ENCODE measurements at regions of chr17 and their contacts with region 1.

Region 1: GRCh38 chr17:27245230-27245696 is 48.7 kb upstream of the WSB1 start:
- DNase-seq: peak; percentile 5 to 69 (median 30)
- ATAC-seq: peak; percentile 77
- H3K4me3 ChIP-seq: no peak overlapping the region
- H3K4me3 Mint-ChIP-seq: no peak overlapping the region
- H3K27ac ChIP-seq: no peak overlapping the region
- H3K27ac Mint-ChIP-seq: no peak overlapping the region
- H3K4me1 ChIP-seq: peaks cover 2% of the 10 kb centered on the region
- H3K4me1 Mint-ChIP-seq: no peaks in the 10 kb centered on the region
- H3K27me3 ChIP-seq: no peaks in the 10 kb centered on the region
- H3K27me3 Mint-ChIP-seq: peaks cover 10% of the 10 kb centered on the region
- CTCF ChIP-seq: peak; percentile 46

Region 2: GRCh38 chr17:26731005-26731921 is 514.0 kb before region 1 on chr17:
- CTCF ChIA-PET with region 1: no interaction called
- POLR2A ChIA-PET with region 1: no interaction called
- intact Hi-C with region 1: no loop called
- DNase-seq: peak in 1 of 14 experiments; percentile 2
- ATAC-seq: no peak
- H3K4me3 ChIP-seq: no peak overlapping the region
- H3K4me3 Mint-ChIP-seq: no peak overlapping the region
- H3K27ac ChIP-seq: no peak overlapping the region
- H3K27ac Mint-ChIP-seq: no peak overlapping the region
- H3K4me1 ChIP-seq: no peaks in the 10 kb centered on the region
- H3K4me1 Mint-ChIP-seq: no peaks in the 10 kb centered on the region
- H3K27me3 ChIP-seq: no peaks in the 10 kb centered on the region
- H3K27me3 Mint-ChIP-seq: no peaks in the 10 kb centered on the region
- CTCF ChIP-seq: no peak

Region 3: GRCh38 chr17:27265333-27265732 is 20.1 kb after region 1 on chr17:
- CTCF ChIA-PET with region 1: no interaction called
- POLR2A ChIA-PET with region 1: no interaction called
- intact Hi-C with region 1: no loop called
- DNase-seq: no peak
- ATAC-seq: no peak
- H3K4me3 ChIP-seq: no peak overlapping the region
- H3K4me3 Mint-ChIP-seq: no peak overlapping the region
- H3K27ac ChIP-seq: no peak overlapping the region
- H3K27ac Mint-ChIP-seq: no peak overlapping the region
- H3K4me1 ChIP-seq: no peaks in the 10 kb centered on the region
- H3K4me1 Mint-ChIP-seq: no peaks in the 10 kb centered on the region
- H3K27me3 ChIP-seq: peaks cover 0 to 3% of the 10 kb centered on the region in 2 experiments
- H3K27me3 Mint-ChIP-seq: peaks cover 12% of the 10 kb centered on the region
- CTCF ChIP-seq: no peak

Region 4: GRCh38 chr17:27332485-27333409 is 87.5 kb after region 1 on chr17:
- CTCF ChIA-PET with region 1: interaction called, 10 read pairs
- POLR2A ChIA-PET with region 1: no interaction called
- intact Hi-C with region 1: loop called (anchors 2 kb)
- DNase-seq: peak; percentile 73 to 95 (median 88)
- ATAC-seq: peak; percentile 84
- H3K4me3 ChIP-seq: peak overlapping the region; percentile 64
- H3K4me3 Mint-ChIP-seq: peak overlapping the region; percentile 88
- H3K27ac ChIP-seq: peak overlapping the region in 1 of 2 donors; percentile 76
- H3K27ac Mint-ChIP-seq: peak overlapping the region; percentile 88
- H3K4me1 ChIP-seq: peaks cover 19% of the 10 kb centered on the region
- H3K4me1 Mint-ChIP-seq: peaks cover 26% of the 10 kb centered on the region
- H3K27me3 ChIP-seq: no peaks in the 10 kb centered on the region
- H3K27me3 Mint-ChIP-seq: no peaks in the 10 kb centered on the region
- CTCF ChIP-seq: peak; percentile 74